Lower leg skin (tissue), 4 donors: ENCODE measurements at regions of chr2 and their contacts with region 1.

Region 1: DNA sequence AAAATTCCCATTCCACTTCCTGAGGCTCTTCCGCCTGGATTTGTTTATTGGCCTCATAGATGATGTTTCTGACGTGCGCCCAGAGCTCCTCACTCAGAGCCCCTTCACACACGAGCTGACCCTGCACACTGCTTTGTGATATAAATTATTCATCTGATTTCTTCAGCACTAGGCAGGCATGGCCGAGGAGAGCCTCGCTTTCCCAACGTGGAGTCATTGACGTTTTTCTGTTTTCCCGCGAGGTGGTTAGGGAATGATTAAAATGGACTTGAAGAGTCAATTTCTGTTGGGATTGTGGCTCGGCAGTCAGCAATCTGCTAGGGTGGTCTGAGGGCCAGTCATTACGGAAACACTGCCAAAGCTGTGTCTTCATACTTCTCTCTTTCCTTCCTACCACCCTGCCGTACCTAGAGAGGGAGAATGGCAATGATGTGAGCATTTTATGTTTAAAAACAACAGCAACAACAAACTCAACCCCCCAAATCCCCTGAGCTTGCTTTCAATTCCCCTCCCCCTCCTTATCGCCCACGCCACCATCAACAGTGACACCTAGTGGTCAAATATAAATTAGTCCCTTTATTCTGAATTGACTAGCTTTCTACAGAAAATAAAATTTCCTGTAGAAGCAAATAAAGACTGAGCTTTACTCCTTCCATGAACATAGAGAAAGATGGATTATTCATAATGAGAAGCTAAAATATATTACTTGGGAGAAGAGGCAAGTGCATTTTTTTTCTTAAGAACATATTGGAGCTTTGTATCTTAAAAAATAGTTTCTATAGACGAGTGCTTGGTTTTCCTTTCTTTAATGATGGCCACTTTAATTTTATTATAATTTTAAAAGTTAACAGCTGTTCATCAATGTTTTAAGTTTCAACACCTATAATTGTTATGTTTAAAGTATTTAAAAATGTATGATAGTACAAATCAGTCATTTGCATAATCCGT is 285.1 kb downstream of the MTX2 start:
- DNase-seq: peak in 1 of 2 donors; percentile 25
- H3K4me3 ChIP-seq: no peak overlapping the region
- CTCF ChIP-seq: peak in 1 of 3 donors; percentile 77
- POLR2A ChIP-seq: no peak

Region 2: DNA sequence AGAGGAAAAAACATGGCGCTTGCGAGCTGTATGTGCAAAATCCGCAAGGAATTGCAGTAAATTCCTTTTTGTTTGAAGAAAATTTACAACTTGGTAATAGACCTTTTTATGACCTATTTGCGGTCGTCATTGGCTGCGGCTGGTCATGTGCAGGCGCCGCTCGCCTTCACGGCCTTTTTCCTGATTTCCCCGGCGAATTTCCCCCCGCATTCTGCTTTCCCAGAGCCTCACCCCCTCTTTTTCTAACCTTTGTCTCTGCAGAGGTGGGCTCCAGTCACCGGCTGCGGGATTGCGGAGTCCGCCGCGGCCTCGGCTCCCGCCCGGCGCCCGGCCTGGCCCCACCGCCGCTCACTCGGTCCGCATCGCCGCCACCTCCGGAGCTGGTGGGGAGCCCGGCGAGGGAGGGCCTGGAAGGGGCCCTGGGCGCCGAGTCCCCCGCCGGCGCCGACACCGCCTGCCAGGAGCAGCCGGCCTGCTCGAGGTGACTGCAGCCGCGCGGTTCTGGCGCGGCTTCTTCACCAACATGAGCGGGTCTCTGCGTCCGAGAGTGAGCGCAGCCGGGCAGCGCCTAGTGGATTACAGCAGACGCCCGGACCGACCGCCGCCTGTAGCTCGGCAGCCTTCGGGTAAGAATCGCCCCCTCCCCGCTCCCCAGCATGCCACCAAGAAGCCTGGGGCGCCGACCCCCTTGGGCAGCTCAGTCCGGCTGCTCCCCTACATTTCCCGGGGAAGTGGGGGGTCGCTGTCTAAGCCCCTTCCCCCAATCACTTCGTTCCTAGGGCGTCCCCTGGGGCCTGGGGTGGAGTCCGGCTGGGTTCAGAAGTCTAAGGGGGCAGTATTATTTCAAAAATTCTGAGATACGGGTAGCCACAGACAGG is 417.8 kb before region 1 on chr2:
- intact Hi-C with region 1: loop called (anchors 5 kb)
- DNase-seq: peak in 1 of 2 donors; percentile 87
- H3K4me3 ChIP-seq: peak overlapping the region; percentile 34
- CTCF ChIP-seq: no peak
- POLR2A ChIP-seq: no peak